Heart right ventricle (tissue), 16 donors: ENCODE measurements at regions of chr1 and their contacts with region 1.

Region 1: GRCh38 chr1:231357831-231358354 is 19.8 kb downstream of the SPRTN start:
- DNase-seq: peak in 1 of 2 donors; percentile 35
- ATAC-seq: peak; percentile 60 to 82 (median 79)
- H3K4me3 ChIP-seq: no peak overlapping the region
- H3K27ac ChIP-seq: peak overlapping the region in 5 of 10 donors; percentile 1 to 61 (median 20)
- H3K4me1 ChIP-seq: peaks cover 0 to 28% (median 20%) of the 10 kb centered on the region in 9 donors
- H3K27me3 ChIP-seq: no peaks in the 10 kb centered on the region
- CTCF ChIP-seq: peak; percentile 62 to 89 (median 82)

Region 2: GRCh38 chr1:231431665-231432415 is 73.9 kb after region 1 on chr1:
- intact Hi-C with region 1: no loop called
- DNase-seq: no peak
- ATAC-seq: no peak
- H3K4me3 ChIP-seq: no peak overlapping the region
- H3K27ac ChIP-seq: peak overlapping the region in 2 of 10 donors; percentile 13 to 19
- H3K4me1 ChIP-seq: peaks cover 0 to 12% (median 5%) of the 10 kb centered on the region in 9 donors
- H3K27me3 ChIP-seq: no peaks in the 10 kb centered on the region
- CTCF ChIP-seq: no peak

Region 3: DNA sequence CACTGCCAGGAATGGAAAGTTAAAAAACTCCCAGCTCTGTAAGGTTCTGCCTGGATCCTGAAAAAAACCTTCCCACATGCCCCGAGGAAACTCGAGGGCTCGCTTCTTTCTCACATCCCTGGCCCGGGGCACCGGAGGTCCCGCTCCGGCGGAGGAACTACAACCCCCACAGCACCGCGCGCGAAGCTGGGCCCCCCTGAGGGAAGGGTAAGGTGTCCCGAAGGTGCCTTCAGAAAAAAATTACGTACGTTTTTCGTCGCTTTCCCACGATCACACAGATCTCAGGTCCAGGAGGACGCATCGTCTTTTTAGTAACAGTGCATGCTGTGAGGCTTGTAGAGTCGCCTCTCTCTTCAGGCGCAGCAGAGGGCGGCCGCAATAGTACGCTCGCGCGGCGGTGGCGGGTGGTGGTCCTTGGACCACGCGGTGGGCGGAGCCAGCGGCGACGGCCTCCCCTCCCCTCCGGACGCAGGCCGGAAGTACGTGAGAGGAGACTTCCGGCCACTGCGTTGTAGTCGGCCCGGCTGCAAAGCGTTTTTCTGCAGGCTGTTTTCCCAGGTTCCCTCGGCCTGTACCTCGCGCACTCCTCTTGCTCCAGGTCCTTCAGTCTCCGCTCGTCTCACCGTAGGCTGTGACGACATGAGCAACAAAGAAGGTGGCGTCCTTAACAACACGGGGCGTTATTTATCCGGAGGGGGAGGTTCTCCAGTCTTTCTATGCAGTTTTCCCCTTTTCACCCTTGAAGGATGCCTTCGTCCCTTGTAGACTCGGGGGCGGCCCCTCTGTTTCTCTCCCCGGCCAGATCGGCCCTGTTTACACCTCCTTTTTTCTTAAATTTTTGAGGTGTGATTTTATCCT is 170.5 kb after region 1 on chr1 and contains the start of gene TSNAX:
- intact Hi-C with region 1: loop called in 3 of 10 experiments (anchors 5 kb)
- DNase-seq: peak; percentile 91 to 92
- ATAC-seq: peak; percentile 99
- H3K4me3 ChIP-seq: peak within 1 kb of the TSS; percentile 59 to 85 (median 74)
- H3K27ac ChIP-seq: peak within 1 kb of the TSS; percentile 87 to 97 (median 92)
- H3K4me1 ChIP-seq: peaks cover 2 to 63% (median 42%) of the 10 kb centered on the region in 9 donors
- H3K27me3 ChIP-seq: no peaks in the 10 kb centered on the region
- CTCF ChIP-seq: no peak
- total RNA-seq, gene TSNAX: 26.2 to 37.9 (median 33.2) TPM

Region 4: GRCh38 chr1:231584124-231584523 is 226.2 kb after region 1 on chr1:
- intact Hi-C with region 1: loop called in 2 of 10 experiments (anchors 5 kb)
- DNase-seq: no peak
- ATAC-seq: peak in 3 of 8 donors; percentile 29 to 58 (median 49)
- H3K4me3 ChIP-seq: no peak overlapping the region
- H3K27ac ChIP-seq: peak overlapping the region in 3 of 10 donors; percentile 31 to 57 (median 45)
- H3K4me1 ChIP-seq: peaks cover 0 to 42% (median 3%) of the 10 kb centered on the region in 9 donors
- H3K27me3 ChIP-seq: no peaks in the 10 kb centered on the region
- CTCF ChIP-seq: peak in 5 of 9 donors; percentile 10 to 41 (median 21)

Region 5: DNA sequence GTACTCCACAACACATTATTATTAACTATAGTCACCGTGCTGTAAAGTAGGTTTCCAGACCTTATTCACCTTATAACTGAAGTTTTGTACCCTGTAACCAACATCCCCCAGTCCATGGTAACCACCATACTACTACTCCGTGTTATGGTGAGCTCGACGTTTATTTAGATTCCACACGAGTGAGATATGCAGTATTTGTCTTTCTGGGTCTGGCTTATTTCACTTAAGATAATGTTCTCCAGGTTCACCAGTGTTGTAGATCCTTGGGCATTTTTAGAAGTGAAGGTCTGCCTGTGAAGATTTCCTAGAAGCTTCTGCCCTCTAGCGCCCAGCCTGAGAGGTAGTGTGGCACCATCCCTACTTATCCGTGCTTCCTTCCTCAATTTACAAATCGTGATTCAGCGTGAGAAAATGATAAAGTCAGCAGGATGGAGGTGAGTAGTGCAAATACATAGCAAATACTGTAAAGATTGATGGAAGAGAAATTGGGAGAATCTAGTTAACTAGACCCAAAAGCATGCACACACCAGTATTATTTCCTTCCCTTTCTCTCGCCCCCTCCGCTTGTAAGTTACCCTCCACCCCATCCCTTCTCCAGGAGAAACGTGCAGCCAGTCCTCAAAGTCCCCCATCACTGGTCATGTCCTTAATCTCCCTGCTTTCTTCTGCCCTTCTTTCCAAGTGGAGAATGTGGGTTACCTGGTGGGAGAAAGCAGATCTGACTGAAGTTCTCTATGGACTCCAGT is 232.7 kb after region 1 on chr1:
- intact Hi-C with region 1: loop called in 8 of 10 experiments (anchors 1 to 5 kb)
- DNase-seq: peak; percentile 22 to 49
- ATAC-seq: peak in 7 of 8 donors; percentile 82 to 95 (median 92)
- H3K4me3 ChIP-seq: no peak overlapping the region
- H3K27ac ChIP-seq: peak overlapping the region in 2 of 10 donors; percentile 56 to 67
- H3K4me1 ChIP-seq: peaks cover 0 to 37% (median 8%) of the 10 kb centered on the region in 9 donors
- H3K27me3 ChIP-seq: no peaks in the 10 kb centered on the region
- CTCF ChIP-seq: peak; percentile 65 to 88 (median 80)

Region 6: GRCh38 chr1:231603598-231604275 is 245.8 kb after region 1 on chr1:
- intact Hi-C with region 1: loop called in 3 of 10 experiments (anchors 2 to 10 kb)
- DNase-seq: peak in 1 of 2 donors; percentile 27
- ATAC-seq: peak in 7 of 8 donors; percentile 37 to 68 (median 59)
- H3K4me3 ChIP-seq: peak overlapping the region in 9 of 10 donors; percentile 28 to 58 (median 49)
- H3K27ac ChIP-seq: peak overlapping the region in 9 of 10 donors; percentile 4 to 70 (median 36)
- H3K4me1 ChIP-seq: peaks cover 8 to 48% (median 29%) of the 10 kb centered on the region in 9 donors
- H3K27me3 ChIP-seq: no peaks in the 10 kb centered on the region
- CTCF ChIP-seq: peak; percentile 66 to 86 (median 82)